ENCODE measurements at regions of chr17 and their contacts with region 1.

Region 1: DNA sequence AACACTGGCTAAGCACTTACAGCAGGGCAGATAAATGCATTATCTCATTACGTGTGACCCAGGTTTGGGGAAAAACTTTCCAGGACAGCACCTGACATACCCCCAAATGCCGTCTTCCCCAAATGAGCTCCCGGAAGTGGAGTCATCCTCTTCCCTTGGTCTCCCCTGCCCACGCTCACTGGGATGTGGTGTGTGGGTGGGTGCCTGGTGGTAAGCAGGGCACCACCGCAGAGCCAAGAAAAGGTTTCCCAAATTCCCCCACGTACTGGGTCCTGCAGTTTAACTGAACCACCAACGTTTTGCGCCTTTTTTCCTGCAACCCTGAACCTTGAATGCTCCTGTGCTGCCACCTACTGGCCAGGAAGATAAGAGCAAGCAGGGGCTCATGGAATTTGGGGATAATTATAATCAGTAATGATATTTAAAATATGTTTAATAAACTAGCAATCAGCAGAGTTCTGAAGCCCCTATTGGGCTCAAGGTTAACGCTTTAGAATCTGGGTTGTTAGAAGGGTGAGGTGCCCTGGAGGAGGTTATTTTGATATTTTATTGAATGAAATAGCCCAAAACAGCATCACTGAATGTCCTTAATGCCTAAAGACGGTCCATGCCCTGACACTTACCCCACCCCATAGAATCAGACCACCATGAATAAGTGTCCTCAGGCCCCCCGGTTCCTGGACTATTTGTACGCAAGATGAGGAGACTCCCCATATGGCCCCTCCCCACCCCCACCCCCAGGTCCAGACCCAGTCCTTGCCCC is 8.0 kb downstream of the SPPL2C start:
- DNase-seq: peak; percentile 29
- H3K4me3 Mint-ChIP-seq: no peak overlapping the region
- H3K27ac Mint-ChIP-seq: no peak overlapping the region
- H3K4me1 Mint-ChIP-seq: peaks cover 4% of the 10 kb centered on the region
- H3K27me3 Mint-ChIP-seq: peaks cover 7% of the 10 kb centered on the region

Region 2: DNA sequence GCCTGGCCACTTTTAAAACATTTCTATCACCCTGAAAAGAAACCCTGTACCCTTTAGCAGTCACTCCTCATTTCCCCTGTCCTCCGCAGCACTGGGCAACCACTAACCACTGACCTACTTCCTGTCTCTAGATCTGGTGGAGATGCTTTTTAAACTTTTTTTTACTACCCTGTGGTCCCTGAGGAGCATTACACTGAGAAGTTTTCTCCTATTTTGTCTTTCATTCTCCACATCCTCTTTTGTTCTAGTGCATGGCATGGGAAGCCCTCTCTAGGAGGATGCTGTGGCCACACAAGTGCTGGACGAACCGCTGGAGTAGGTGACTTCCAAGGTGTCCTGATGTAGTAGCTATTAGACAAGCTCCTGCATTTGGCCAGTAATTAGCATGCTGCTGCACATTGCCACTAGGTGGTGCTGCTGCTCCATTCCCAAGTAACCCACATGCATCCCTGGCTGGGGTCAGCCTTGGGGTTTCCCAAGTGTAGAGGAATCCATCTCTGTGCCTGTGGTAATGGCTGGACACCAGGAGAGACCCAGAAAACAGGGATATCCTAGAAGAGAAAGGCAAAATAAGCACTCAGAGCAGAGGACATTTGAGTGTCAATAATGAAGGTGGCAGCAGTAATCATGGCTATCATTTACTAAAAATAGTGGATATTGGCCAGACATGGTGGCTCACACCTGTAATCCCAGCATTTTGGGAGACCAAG is 212.4 kb before region 1 on chr17:
- intact Hi-C with region 1: loop called (anchors 5 kb)
- DNase-seq: peak; percentile 47
- H3K4me3 Mint-ChIP-seq: no peak overlapping the region
- H3K27ac Mint-ChIP-seq: no peak overlapping the region
- H3K4me1 Mint-ChIP-seq: peaks cover 5% of the 10 kb centered on the region
- H3K27me3 Mint-ChIP-seq: no peaks in the 10 kb centered on the region

Region 3: GRCh38 chr17:45948881-45949624 is 96.3 kb after region 1 on chr17:
- intact Hi-C with region 1: loop called (anchors 5 kb)
- DNase-seq: peak; percentile 42
- H3K4me3 Mint-ChIP-seq: peak overlapping the region; percentile 57
- H3K27ac Mint-ChIP-seq: no peak overlapping the region
- H3K4me1 Mint-ChIP-seq: no peaks in the 10 kb centered on the region
- H3K27me3 Mint-ChIP-seq: peaks cover 35% of the 10 kb centered on the region

Region 4: GRCh38 chr17:45963889-45964288 is 111.2 kb after region 1 on chr17:
- intact Hi-C with region 1: no loop called
- DNase-seq: no peak
- H3K4me3 Mint-ChIP-seq: no peak overlapping the region
- H3K27ac Mint-ChIP-seq: no peak overlapping the region
- H3K4me1 Mint-ChIP-seq: no peaks in the 10 kb centered on the region
- H3K27me3 Mint-ChIP-seq: peaks cover 13% of the 10 kb centered on the region

Measured in activated T-helper 1 cell treated with anti-CD3 and anti-CD28 coated beads, Interleukin-12 subunit alpha, Interleukin-12 subunit beta, Interleukin-2, Interleukin-4 antibody, amounts not matched to agents 30 ng/mL and 10 ng/mL and 1 ng/mL, durations not matched to agents 14 hours and 24 hours and 36 hours (primary cell).